ENCODE measurements at regions of chr1 and their contacts with region 1.

Region 1: DNA sequence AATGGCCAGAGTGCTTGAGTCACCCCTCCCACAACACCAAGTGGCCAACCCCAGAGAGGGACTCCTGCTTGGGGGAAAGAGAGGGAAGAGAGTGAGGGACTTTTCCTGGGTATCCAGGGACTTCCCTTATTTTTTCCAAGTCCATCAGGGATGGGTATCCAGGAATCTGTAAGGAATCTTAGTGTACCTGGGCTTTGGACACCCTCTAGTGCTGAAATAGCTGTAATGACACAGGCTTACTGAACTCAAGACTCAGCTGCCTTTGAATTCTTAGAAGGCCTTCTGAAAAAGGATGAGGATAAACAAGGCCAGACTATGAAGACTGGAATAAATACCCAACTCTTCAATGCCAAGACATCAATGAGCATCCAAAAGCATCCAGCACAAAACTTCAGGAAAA is 12.0 kb downstream of the TSHB start:
- DNase-seq: no peak
- H3K4me3 ChIP-seq: no peak overlapping the region
- H3K27ac ChIP-seq: no peak overlapping the region
- H3K4me1 ChIP-seq: no peaks in the 10 kb centered on the region
- H3K27me3 ChIP-seq: no peaks in the 10 kb centered on the region
- CTCF ChIP-seq: peak in 3 of 5 experiments; percentile 13 to 34 (median 18)
- EP300 ChIP-seq: no peak
- POLR2A ChIP-seq: no peak

Region 2: GRCh38 chr1:114670083-114671010 is 371.3 kb before region 1 on chr1:
- in situ Hi-C with region 1: no loop called
- intact Hi-C with region 1: no loop called
- DNase-seq: peak; percentile 96
- H3K4me3 ChIP-seq: peak overlapping the region; percentile 46 to 73 (median 54)
- H3K27ac ChIP-seq: peak overlapping the region; percentile 76 to 85 (median 81)
- H3K4me1 ChIP-seq: peaks cover 0 to 16% (median 5%) of the 10 kb centered on the region in 4 donors
- H3K27me3 ChIP-seq: no peaks in the 10 kb centered on the region
- CTCF ChIP-seq: peak in 3 of 5 experiments; percentile 29 to 39 (median 33)
- EP300 ChIP-seq: no peak
- POLR2A ChIP-seq: peak; percentile 65

Region 3: GRCh38 chr1:114745291-114745690 is 296.4 kb before region 1 on chr1:
- in situ Hi-C with region 1: no loop called
- intact Hi-C with region 1: no loop called
- DNase-seq: no peak
- H3K4me3 ChIP-seq: no peak overlapping the region
- H3K27ac ChIP-seq: no peak overlapping the region
- H3K4me1 ChIP-seq: peaks cover 0 to 32% (median 4%) of the 10 kb centered on the region in 4 donors
- H3K27me3 ChIP-seq: no peaks in the 10 kb centered on the region
- CTCF ChIP-seq: no peak
- EP300 ChIP-seq: no peak
- POLR2A ChIP-seq: no peak

Region 4: GRCh38 chr1:114780344-114781226 is 261.1 kb before region 1 on chr1 and contains the start of gene SIKE1:
- in situ Hi-C with region 1: no loop called
- intact Hi-C with region 1: no loop called
- DNase-seq: peak; percentile 96
- H3K4me3 ChIP-seq: peak within 1 kb of the TSS; percentile 67 to 93 (median 72)
- H3K27ac ChIP-seq: peak within 1 kb of the TSS; percentile 93 to 95 (median 94)
- H3K4me1 ChIP-seq: peaks cover 0 to 17% (median 5%) of the 10 kb centered on the region in 4 donors
- H3K27me3 ChIP-seq: peaks cover 12% of the 10 kb centered on the region
- CTCF ChIP-seq: no peak
- EP300 ChIP-seq: no peak
- POLR2A ChIP-seq: peak; percentile 90
- total RNA-seq, gene SIKE1: 20.9 to 44.5 (median 35.3) TPM

Region 5: GRCh38 chr1:115112496-115113375 is 71.1 kb after region 1 on chr1:
- in situ Hi-C with region 1: no loop called
- intact Hi-C with region 1: loop called (anchors 10 kb)
- DNase-seq: peak; percentile 38
- H3K4me3 ChIP-seq: no peak overlapping the region
- H3K27ac ChIP-seq: no peak overlapping the region
- H3K4me1 ChIP-seq: peaks cover 0 to 9% (median 0%) of the 10 kb centered on the region in 4 donors
- H3K27me3 ChIP-seq: no peaks in the 10 kb centered on the region
- CTCF ChIP-seq: peak; percentile 87 to 96 (median 95)
- EP300 ChIP-seq: no peak
- POLR2A ChIP-seq: no peak

Region 6: DNA sequence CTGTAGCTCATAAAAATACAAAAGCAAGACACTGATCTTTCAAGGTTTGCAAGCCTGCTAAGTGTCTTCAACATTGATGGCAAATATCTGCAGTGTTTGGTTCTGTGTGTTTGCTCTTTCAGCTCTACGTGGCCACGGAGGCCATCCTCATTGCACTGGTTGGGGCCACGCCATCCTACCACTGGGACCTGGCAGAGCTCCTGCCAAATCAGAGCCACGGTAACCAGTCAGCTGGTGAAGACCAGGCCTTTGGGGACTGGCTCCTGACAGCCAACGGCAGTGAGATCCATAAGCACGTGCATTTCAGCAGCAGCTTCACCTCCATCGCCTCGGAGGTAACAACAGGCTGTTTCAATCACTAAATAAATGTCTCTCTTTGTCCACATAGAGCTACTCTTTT is 950.3 kb after region 1 on chr1:
- in situ Hi-C with region 1: no loop called
- intact Hi-C with region 1: no loop called
- DNase-seq: no peak
- H3K4me3 ChIP-seq: no peak overlapping the region
- H3K27ac ChIP-seq: no peak overlapping the region
- H3K4me1 ChIP-seq: no peaks in the 10 kb centered on the region
- H3K27me3 ChIP-seq: no peaks in the 10 kb centered on the region
- CTCF ChIP-seq: no peak
- EP300 ChIP-seq: no peak
- POLR2A ChIP-seq: no peak